Dendritic cell treated with granulocyte-macrophage colony-stimulating factor and Interleukin-4, amounts not matched to agents 40 ng/mL and 50 ng/mL, for 4 days (primary cell): ENCODE measurements at regions of chr1 and their contacts with region 1.

Region 1: GRCh38 chr1:94061513-94062443 is 59.2 kb downstream of the ABCA4 start:
- H3K4me3 Mint-ChIP-seq: no peak overlapping the region
- H3K27ac Mint-ChIP-seq: no peak overlapping the region
- H3K4me1 Mint-ChIP-seq: peaks cover 9% of the 10 kb centered on the region
- H3K27me3 Mint-ChIP-seq: peaks cover 67% of the 10 kb centered on the region

Region 2: DNA sequence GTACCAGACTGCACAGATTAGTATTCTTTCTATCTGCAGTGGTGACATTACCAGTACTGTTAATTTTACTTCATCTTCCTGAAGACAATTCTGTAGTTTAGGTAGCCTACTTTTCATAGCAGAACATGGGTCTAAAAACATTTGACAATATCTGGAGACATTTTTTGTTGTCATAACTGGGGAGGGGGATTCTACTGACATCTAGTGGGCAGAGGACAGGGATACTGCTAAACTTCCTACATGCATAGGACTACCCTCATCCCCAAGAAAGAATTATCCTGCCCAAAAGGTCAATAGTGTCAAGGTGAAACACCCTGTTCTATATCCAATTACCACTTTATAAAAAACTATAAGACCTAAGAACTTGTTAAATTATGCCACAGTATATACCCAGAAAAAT is 179.0 kb after region 1 on chr1:
- intact Hi-C with region 1: loop called (anchors 5 kb)
- H3K4me3 Mint-ChIP-seq: no peak overlapping the region
- H3K27ac Mint-ChIP-seq: no peak overlapping the region
- H3K4me1 Mint-ChIP-seq: peaks cover 16% of the 10 kb centered on the region
- H3K27me3 Mint-ChIP-seq: peaks cover 87% of the 10 kb centered on the region